ENCODE measurements at regions of chr1 and their contacts with region 1.

Region 1: DNA sequence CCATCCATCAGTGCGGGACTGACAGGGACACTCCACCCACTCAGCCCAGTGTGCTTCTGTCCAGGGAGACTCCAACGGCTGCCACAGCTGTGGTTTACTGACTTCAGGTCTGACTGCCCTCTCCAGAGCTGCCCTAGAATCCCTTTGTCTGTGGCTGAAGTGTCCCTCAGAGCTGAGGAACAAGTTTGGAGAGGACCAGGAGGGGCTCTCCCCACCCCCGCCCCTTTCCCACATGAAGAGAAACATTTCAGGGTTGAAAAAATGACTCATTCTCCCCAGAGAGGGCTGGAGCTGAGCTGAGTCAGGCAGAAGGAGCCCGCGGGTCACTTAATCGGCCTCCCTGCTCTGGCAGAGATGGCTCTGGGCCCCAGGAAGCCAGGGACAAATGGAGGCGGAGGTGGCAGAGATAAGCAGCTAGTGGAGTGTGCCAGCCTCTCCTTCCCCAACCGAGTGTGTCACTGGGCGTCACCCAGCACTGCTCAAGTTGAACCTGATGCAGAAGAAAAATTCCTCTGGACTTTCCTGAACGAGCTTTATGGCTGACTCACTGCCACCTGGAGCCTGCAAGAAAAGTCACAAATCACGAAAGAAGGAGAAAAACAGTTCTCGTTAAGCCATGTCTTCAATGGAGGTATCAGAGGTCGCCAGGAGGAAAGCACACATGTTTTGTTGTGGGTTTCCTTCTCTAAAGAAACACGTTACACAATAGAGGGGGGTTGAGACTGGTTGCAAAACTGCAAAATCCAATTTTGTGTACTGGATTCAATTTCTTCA is 34.3 kb upstream of the ECE1 start:
- DNase-seq: peak; percentile 76
- H3K4me3 ChIP-seq: no peak overlapping the region
- H3K27ac ChIP-seq: peak overlapping the region; percentile 87 to 94
- H3K4me1 ChIP-seq: peaks cover 43 to 73% of the 10 kb centered on the region in 2 experiments
- H3K27me3 ChIP-seq: no peaks in the 10 kb centered on the region
- CTCF ChIP-seq: no peak
- EP300 ChIP-seq: peak in 1 of 2 experiments; percentile 72; a peak in 1 of 4 replicates
- RAD21 ChIP-seq: peak; percentile 30

Region 2: GRCh38 chr1:21308847-21309652 is 15.5 kb before region 1 on chr1:
- CTCF ChIA-PET with region 1: interaction called, 15 read pairs
- POLR2A ChIA-PET with region 1: interaction called, 6 read pairs
- DNase-seq: peak; percentile 60
- H3K4me3 ChIP-seq: no peak overlapping the region
- H3K27ac ChIP-seq: peak overlapping the region; percentile 24 to 99; a peak in 3 of 4 replicates
- H3K4me1 ChIP-seq: peaks cover 49 to 83% of the 10 kb centered on the region in 2 experiments
- H3K27me3 ChIP-seq: no peaks in the 10 kb centered on the region
- CTCF ChIP-seq: no peak
- EP300 ChIP-seq: peak in 1 of 2 experiments; percentile 84; a peak in 2 of 4 replicates
- RAD21 ChIP-seq: 0 out of 2 replicates have a peak, but pooled peaks have one; percentile 6

Measured in SK-N-SH (cell line).